ENCODE measurements at regions of chr1 and their contacts with region 1.

Region 1: GRCh38 chr1:110209715-110210603 is at the start of gene KCNC4:
- DNase-seq: peak; percentile 80 to 93 (median 91)
- ATAC-seq: peak; percentile 93
- H3K4me3 ChIP-seq: peak within 1 kb of the TSS; percentile 72
- H3K4me3 Mint-ChIP-seq: peak within 1 kb of the TSS; percentile 86 to 94 (median 88)
- H3K27ac ChIP-seq: peak within 1 kb of the TSS; percentile 89
- H3K27ac Mint-ChIP-seq: peak within 1 kb of the TSS; percentile 88 to 98 (median 95)
- H3K4me1 ChIP-seq: peaks cover 7 to 20% of the 10 kb centered on the region in 2 donors
- H3K4me1 Mint-ChIP-seq: peaks cover 31 to 61% (median 42%) of the 10 kb centered on the region in 7 donors
- H3K27me3 ChIP-seq: no peaks in the 10 kb centered on the region
- H3K27me3 Mint-ChIP-seq: peaks cover 0 to 16% (median 0%) of the 10 kb centered on the region in 5 donors
- total RNA-seq, gene KCNC4: 5.8 to 18.2 (median 12.4) TPM

Region 2: GRCh38 chr1:110229348-110230001 is 19.5 kb after region 1 on chr1:
- CTCF ChIA-PET with region 1: interaction called, 16 read pairs
- POLR2A ChIA-PET with region 1: no interaction called
- intact Hi-C with region 1: no loop called
- DNase-seq: no peak
- ATAC-seq: no peak
- H3K4me3 ChIP-seq: no peak overlapping the region
- H3K4me3 Mint-ChIP-seq: no peak overlapping the region
- H3K27ac ChIP-seq: no peak overlapping the region
- H3K27ac Mint-ChIP-seq: peak overlapping the region in 1 of 9 donors; percentile 11
- H3K4me1 ChIP-seq: no peaks in the 10 kb centered on the region
- H3K4me1 Mint-ChIP-seq: peaks cover 0 to 5% (median 0%) of the 10 kb centered on the region in 7 donors
- H3K27me3 ChIP-seq: no peaks in the 10 kb centered on the region
- H3K27me3 Mint-ChIP-seq: no peaks in the 10 kb centered on the region

Region 3: DNA sequence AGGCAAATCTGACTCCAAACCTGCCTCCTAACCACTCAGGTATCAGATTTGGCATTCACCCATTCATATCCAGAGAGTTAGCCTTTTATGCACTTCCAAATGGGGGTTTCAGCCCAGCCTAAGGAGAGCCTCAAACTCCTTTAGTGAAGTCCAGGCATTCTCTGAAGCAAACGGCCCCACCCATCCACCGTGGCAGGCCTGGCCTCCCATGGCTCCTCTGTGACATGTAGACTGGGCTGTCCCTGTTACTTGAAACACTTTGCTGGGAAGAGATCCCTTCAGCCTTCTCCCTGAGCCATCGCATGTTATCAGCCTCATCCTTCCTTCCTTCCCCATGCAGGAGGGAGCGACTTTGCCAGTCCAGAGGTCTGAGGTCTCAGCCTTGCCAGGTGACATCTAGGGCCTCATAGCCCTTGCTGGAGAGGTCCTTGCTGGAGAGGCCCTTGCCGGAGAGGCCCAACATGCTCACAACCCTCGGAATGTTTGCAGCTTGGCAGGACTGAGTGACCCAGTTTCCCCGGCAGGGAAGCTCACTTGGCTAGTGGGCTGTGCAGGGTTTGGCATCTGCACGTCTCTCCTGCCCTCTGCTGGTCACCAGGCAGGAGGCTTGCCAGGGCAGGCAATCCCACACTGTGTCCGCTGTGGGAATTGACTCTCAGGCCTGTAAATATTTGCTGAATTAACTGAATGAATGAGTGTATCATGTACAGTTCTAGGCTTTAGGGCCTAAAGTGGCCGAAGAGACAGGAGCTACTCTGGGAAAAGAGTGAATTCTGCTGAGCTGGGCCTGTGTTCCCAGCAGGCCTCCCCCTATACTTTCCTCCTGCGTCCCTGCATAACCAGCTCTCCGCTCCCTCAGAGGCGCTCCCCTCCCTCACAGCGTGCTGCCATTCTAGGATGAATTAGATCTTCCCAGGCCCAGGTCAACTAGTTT is 102.5 kb after region 1 on chr1:
- CTCF ChIA-PET with region 1: interaction called, 252 read pairs
- POLR2A ChIA-PET with region 1: interaction called, 37 read pairs
- intact Hi-C with region 1: loop called (anchors 1 kb)
- DNase-seq: peak; percentile 51 to 80 (median 71)
- ATAC-seq: peak; percentile 95
- H3K4me3 ChIP-seq: no peak overlapping the region
- H3K4me3 Mint-ChIP-seq: no peak overlapping the region
- H3K27ac ChIP-seq: no peak overlapping the region
- H3K27ac Mint-ChIP-seq: peak overlapping the region in 1 of 9 donors; percentile 14
- H3K4me1 ChIP-seq: peaks cover 0 to 5% of the 10 kb centered on the region in 2 donors
- H3K4me1 Mint-ChIP-seq: peaks cover 0 to 2% (median 0%) of the 10 kb centered on the region in 7 donors
- H3K27me3 ChIP-seq: no peaks in the 10 kb centered on the region
- H3K27me3 Mint-ChIP-seq: no peaks in the 10 kb centered on the region

Region 4: GRCh38 chr1:110495926-110496600 is 286.1 kb after region 1 on chr1:
- CTCF ChIA-PET with region 1: interaction called, 25 read pairs
- POLR2A ChIA-PET with region 1: no interaction called
- intact Hi-C with region 1: no loop called
- DNase-seq: peak; percentile 48 to 76 (median 64)
- ATAC-seq: peak; percentile 88
- H3K4me3 ChIP-seq: no peak overlapping the region
- H3K4me3 Mint-ChIP-seq: no peak overlapping the region
- H3K27ac ChIP-seq: no peak overlapping the region
- H3K27ac Mint-ChIP-seq: no peak overlapping the region
- H3K4me1 ChIP-seq: no peaks in the 10 kb centered on the region
- H3K4me1 Mint-ChIP-seq: peaks cover 0 to 6% (median 0%) of the 10 kb centered on the region in 7 donors
- H3K27me3 ChIP-seq: no peaks in the 10 kb centered on the region
- H3K27me3 Mint-ChIP-seq: no peaks in the 10 kb centered on the region

Region 5: DNA sequence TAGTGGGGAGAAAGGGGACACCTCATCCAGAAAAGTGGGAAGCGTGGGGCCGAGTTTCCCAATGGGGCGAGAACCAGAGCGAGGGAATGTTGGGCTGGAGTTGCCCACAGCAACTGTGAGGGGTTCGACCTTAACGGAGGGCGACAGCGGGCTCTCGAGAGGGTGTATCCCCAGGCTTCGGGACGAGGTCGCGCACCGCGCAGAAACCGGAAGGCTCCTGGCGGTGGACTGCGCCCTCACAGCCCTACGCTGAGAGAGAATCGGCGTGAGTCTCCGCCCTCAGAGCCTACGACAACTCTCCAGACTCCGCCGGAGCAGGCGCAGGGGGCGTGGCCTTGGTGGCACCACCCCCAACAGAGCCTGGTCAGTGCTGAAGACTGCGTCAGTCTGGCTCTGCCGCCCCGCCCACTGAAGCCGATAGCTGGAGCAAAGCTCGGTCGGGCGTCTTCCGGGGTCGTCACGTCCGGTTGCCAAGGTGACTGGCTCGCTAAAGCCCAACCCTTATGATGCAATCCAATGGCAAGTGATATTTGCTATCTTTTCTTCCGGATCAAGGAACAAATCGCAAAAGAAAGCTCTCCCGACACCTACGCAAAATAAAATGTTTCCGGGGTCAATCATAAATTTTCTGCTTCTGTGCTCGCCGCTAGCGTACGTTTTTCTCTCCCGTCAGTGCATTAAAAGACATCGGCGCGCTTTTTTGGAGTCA is 753.9 kb after region 1 on chr1 and contains the start of gene LRIF1:
- CTCF ChIA-PET with region 1: no interaction called
- POLR2A ChIA-PET with region 1: no interaction called
- intact Hi-C with region 1: loop called in 1 of 2 experiments (anchors 2 kb)
- DNase-seq: peak; percentile 96 to 100 (median 100)
- ATAC-seq: peak; percentile 98
- H3K4me3 ChIP-seq: peak within 1 kb of the TSS; percentile 90
- H3K4me3 Mint-ChIP-seq: peak within 1 kb of the TSS; percentile 81 to 98 (median 93)
- H3K27ac ChIP-seq: peak within 1 kb of the TSS; percentile 89
- H3K27ac Mint-ChIP-seq: peak within 1 kb of the TSS; percentile 89 to 99 (median 97)
- H3K4me1 ChIP-seq: peaks cover 25% of the 10 kb centered on the region in 2 donors
- H3K4me1 Mint-ChIP-seq: peaks cover 29 to 50% (median 35%) of the 10 kb centered on the region in 7 donors
- H3K27me3 ChIP-seq: peaks cover 0 to under 1% of the 10 kb centered on the region in 2 donors
- H3K27me3 Mint-ChIP-seq: peaks cover 12 to 19% (median 15%) of the 10 kb centered on the region in 5 donors
- total RNA-seq, gene LRIF1: 7.9 to 25.8 (median 17.3) TPM